MCF 10A (cell line): ENCODE measurements at regions of chr21 and their contacts with region 1.

Region 1: DNA sequence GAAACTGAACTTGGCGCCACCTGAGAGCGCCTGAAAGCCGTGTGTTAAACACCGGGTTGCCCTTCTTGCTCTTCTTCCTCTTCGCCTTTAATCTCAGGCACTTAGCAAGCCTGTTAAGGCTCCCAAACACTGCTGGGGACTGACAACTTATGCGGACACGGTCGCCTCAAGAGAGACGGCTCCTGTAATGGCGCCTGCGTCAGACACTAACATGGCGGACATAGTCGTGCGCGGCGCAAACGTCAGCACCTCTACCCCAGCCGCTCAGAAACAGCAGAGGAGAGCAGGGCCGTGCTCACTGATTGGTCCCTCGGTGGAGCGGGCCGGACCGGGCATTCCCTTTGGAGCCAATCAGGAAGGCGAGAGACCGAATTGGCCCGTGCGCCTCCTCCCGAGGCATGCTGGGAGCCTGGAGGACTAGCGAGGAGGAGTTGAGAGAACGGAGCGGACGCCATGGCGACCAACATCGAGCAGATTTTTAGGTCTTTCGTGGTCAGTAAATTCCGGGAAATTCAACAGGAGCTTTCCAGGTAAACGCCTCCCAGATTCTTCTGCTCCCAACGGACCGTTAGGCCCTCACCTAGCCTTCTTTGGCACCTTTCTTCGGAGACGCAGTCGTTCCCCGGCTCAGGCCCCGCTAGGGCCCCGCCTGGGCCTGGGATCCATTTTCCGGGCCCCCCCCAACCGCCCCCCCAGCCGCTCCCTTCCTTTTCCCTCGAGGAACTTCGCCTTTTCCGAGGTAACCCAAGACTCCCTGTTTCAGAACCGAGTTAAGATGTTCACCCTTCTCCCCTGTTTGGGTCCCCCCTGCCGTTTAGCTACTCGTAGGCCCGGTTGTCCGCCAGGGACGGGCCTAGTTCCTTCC is at the start of gene SON:
- DNase-seq: peak; percentile 99
- H3K4me3 Mint-ChIP-seq: peak within 1 kb of the TSS; percentile 81
- H3K27ac Mint-ChIP-seq: peak within 1 kb of the TSS; percentile 99
- H3K4me1 Mint-ChIP-seq: peaks cover 17% of the 10 kb centered on the region
- H3K27me3 Mint-ChIP-seq: no peaks in the 10 kb centered on the region
- CTCF ChIP-seq: no peak
- total RNA-seq, gene SON: 289 and 303 TPM in 2 replicates

Region 2: GRCh38 chr21:33212159-33212851 is 330.6 kb before region 1 on chr21:
- CTCF ChIA-PET with region 1: no interaction called
- POLR2A ChIA-PET with region 1: no interaction called
- intact Hi-C with region 1: no loop called
- DNase-seq: peak; percentile 29
- H3K4me3 Mint-ChIP-seq: no peak overlapping the region
- H3K27ac Mint-ChIP-seq: no peak overlapping the region
- H3K4me1 Mint-ChIP-seq: peaks cover 13% of the 10 kb centered on the region
- H3K27me3 Mint-ChIP-seq: no peaks in the 10 kb centered on the region
- CTCF ChIP-seq: no peak

Region 3: DNA sequence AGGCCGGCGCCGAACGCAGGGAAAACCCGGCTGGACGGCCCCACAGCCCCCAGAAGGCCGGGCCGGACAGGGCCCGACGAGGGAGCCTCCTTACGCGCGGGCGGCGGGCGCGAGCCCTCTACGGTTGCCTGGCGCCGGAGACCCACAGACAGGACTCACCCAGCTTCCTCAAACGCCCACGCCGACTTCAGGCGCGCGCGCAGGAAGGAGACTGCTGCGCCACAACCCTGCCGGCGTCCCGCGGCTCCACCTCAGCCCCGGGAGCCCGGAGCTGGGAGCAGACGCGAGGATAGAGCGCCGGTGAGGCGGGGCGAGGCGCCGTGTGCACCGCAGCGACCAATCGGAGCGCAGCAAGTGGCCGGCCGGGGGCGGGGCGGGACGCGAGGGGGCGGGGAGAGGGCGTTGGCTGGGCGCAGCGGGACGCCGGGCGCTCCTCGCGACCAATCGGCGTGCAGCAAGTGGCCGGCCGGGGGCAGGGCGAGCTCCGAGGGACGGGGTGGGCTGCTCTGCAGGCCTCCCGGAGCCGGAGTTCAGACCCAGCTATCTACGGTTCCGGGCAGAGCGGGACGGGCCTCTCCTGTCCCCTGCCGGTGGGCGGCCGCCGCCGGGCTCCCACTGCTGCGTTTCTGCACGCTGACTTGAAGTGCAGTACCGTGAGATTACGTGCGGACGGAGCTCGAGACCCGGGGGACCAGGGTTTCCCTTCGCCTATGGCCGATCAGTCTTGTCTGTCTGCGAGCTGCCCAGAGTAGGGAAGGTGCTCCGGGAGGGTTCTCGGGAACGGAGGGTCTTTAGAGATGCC is 63.0 kb before region 1 on chr21 and contains the start of gene TMEM50B:
- CTCF ChIA-PET with region 1: no interaction called
- POLR2A ChIA-PET with region 1: interaction called, 81 read pairs
- intact Hi-C with region 1: no loop called
- DNase-seq: peak; percentile 95
- H3K4me3 Mint-ChIP-seq: peak within 1 kb of the TSS; percentile 87
- H3K27ac Mint-ChIP-seq: peak within 1 kb of the TSS; percentile 74
- H3K4me1 Mint-ChIP-seq: peaks cover 5% of the 10 kb centered on the region
- H3K27me3 Mint-ChIP-seq: no peaks in the 10 kb centered on the region
- CTCF ChIP-seq: peak; percentile 30
- total RNA-seq, gene TMEM50B: 20.7 and 27.8 TPM in 2 replicates

Region 4: DNA sequence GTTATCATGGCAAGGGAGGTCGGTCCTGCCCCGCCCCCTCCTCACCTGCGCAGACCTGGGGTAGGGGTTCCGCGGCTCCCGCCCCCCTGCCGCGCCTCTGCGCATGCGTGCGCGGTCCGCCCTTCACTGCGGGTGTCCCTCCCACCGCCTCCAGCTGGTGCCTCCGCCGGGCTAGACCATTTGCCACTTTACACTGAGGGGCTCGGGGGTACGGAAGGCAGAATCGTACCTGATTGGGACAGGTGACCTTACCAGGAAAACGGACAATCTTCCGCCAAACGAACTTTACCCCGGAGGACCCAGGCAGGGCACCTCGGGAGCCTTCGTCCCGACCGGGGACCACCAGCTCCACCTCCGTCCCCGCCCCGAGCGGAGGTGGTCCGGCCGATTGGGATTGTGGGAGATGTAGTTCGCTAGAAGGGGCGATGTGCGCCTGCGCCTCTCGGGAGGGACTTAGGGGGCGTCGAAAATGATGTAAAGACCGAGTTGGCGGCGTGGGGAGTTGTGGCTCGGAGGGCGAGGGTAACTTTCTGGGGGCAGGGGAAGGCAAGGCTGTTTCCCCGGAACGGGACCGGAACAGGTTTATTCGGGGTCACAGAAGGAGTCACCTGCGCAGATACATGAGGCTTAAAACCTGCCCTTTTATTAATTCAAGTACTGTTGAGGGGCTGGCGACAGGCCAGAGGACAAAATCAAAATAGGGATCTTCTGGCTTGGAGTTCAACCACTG is 51.3 kb before region 1 on chr21 and contains the start of gene DNAJC28:
- CTCF ChIA-PET with region 1: no interaction called
- POLR2A ChIA-PET with region 1: interaction called, 33 read pairs
- intact Hi-C with region 1: no loop called
- DNase-seq: peak; percentile 89
- H3K4me3 Mint-ChIP-seq: peak within 1 kb of the TSS; percentile 96
- H3K27ac Mint-ChIP-seq: peak within 1 kb of the TSS; percentile 87
- H3K4me1 Mint-ChIP-seq: peaks cover 7% of the 10 kb centered on the region
- H3K27me3 Mint-ChIP-seq: no peaks in the 10 kb centered on the region
- CTCF ChIP-seq: no peak
- total RNA-seq, gene DNAJC28: 0.28 and 0.39 TPM in 2 replicates

Region 5: DNA sequence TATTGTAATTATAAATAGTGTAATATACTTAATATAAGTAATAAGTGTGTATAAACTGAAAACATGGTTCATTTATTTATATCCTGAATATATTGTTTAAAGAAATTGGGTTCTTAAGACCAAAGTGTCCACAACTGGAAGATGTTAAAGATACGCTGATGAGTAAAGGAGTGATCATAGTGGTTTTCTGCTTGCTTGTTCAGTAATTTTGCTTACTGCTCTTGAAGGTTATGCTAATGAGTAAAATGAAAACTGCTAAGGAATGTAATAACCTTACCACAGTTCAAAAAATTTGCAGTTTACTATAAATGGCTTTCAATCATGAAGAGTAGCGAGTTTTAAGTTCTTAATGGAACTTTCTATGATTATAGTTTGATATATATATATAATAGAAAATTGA is 23.6 kb after region 1 on chr21:
- CTCF ChIA-PET with region 1: no interaction called
- POLR2A ChIA-PET with region 1: interaction called, 18 read pairs
- intact Hi-C with region 1: no loop called
- DNase-seq: no peak
- H3K4me3 Mint-ChIP-seq: no peak overlapping the region
- H3K27ac Mint-ChIP-seq: no peak overlapping the region
- H3K4me1 Mint-ChIP-seq: peaks cover 4% of the 10 kb centered on the region
- H3K27me3 Mint-ChIP-seq: no peaks in the 10 kb centered on the region
- CTCF ChIP-seq: no peak

Region 6: DNA sequence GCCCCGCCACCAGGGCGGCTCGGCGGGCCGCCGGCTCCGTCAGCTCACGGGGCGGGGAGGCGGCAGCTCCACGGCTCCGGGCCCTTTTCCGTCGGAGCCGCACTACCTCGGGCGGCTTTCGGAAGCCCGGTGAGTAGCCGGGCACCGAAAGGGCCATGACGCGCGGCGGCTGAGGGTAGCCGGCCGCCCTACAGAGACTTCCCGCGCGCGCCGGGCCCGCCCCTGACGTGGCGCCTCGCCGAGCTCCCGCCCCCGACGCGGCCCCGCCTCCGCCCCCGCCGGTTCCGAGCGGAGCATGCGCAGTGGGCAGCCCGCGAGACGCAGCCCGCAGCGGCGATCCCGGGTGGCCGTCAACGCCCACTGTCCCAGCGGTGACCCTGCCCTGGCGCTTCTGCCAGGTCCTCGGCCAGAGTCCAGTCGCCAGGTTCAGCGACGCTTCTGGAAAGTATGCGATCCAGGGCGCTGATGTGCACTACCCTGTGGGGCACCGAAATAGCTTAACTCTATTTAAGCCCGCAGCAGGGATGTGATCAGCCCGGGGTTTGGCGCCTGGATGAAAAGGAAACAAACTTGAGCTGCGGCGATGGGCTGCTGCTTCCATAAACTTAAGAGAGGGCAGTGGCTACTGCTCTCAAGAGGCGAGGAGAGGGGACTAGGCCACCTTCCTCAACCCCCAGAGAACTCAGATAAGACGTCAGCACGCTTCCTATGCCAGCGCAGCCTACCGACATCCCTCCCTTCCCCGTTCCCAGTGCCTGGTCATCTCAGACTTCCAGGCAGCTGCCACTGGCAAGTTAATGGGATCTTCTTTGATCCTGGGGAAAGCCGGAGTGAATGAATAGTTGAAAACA is 45.8 kb after region 1 on chr21 and contains the start of gene DONSON:
- CTCF ChIA-PET with region 1: no interaction called
- POLR2A ChIA-PET with region 1: interaction called, 15 read pairs
- intact Hi-C with region 1: no loop called
- DNase-seq: peak; percentile 80
- H3K4me3 Mint-ChIP-seq: peak within 1 kb of the TSS; percentile 88
- H3K27ac Mint-ChIP-seq: peak within 1 kb of the TSS; percentile 67
- H3K4me1 Mint-ChIP-seq: peaks cover 5% of the 10 kb centered on the region
- H3K27me3 Mint-ChIP-seq: no peaks in the 10 kb centered on the region
- CTCF ChIP-seq: no peak
- total RNA-seq, gene DONSON: 9.3 and 10.0 TPM in 2 replicates